GM12878 (cell line): ENCODE measurements at regions of chr6 and their contacts with region 1.

Region 1: DNA sequence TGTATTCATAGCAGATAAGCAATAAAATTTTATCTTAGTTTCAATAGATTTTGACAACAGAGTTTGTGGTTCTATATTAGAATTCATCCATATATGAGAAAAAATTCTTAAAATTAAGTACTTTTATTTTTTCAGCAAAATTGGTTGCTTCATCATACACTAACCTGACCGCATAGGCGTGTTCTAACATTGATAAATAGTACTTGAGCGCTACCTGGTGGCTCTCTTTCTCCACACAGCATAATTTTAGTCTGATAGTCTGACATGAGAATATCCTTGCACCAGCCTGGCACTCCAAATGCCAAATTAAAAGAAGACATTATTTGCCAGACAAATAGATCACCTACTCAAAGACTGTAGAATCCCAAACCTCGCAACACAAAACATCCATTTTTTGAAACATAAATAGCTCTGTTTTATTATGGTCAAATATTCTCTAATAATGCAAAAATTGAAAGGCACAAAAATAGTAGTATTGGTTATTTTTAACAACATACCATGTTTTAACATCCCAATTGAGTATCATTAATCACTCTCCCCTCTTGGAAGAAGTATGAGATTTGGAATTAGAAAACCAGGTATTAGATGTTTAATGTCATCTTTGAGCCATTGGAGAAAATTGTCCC is 33.0 kb upstream of the FILIP1 start:
- DNase-seq: peak; percentile 40
- ATAC-seq: peak; percentile 97
- H3K4me3 ChIP-seq: no peak overlapping the region
- H3K27ac ChIP-seq: no peak overlapping the region
- H3K4me1 ChIP-seq: no peaks in the 10 kb centered on the region
- H3K27me3 ChIP-seq: no peaks in the 10 kb centered on the region
- CTCF ChIP-seq: peak; percentile 61 to 78 (median 65)
- EP300 ChIP-seq: no peak
- POLR2A ChIP-seq: no peak
- RAD21 ChIP-seq: peak; percentile 95

Region 2: GRCh38 chr6:73854998-73855718 is 1671.5 kb before region 1 on chr6:
- CTCF ChIA-PET with region 1: no interaction called
- POLR2A ChIA-PET with region 1: no interaction called
- RAD21 ChIA-PET with region 1: no interaction called
- SMC1A ChIA-PET with region 1: no interaction called
- in situ Hi-C with region 1: no loop called
- intact Hi-C with region 1: loop called (anchors 10 kb)
- DNase-seq: no peak
- ATAC-seq: peak; percentile 71
- H3K4me3 ChIP-seq: no peak overlapping the region
- H3K27ac ChIP-seq: no peak overlapping the region
- H3K4me1 ChIP-seq: no peaks in the 10 kb centered on the region
- H3K27me3 ChIP-seq: no peaks in the 10 kb centered on the region
- CTCF ChIP-seq: peak; percentile 52 to 62 (median 59); a peak in 5 of 6 replicates
- EP300 ChIP-seq: no peak
- POLR2A ChIP-seq: no peak
- RAD21 ChIP-seq: peak; percentile 66

Region 3: DNA sequence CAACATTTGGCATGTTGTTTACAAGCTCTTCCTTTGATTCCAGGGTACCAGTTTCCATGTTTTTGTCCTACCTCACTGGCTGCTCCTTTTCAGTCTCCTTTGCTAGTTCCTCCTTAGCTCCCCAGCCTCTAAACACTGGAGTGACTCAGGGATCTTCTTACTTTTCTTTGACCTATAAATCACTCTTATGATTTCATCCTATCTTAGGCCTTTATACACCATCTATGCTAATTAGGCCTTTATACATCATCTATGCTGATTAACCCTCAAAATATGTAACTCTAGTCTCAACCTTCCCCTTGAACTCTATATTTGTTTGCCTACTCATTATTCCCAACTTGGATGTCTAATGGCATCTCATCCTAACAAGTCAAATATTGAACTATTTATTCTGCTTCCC is 251.5 kb before region 1 on chr6:
- CTCF ChIA-PET with region 1: interaction called, 12 read pairs
- POLR2A ChIA-PET with region 1: no interaction called
- RAD21 ChIA-PET with region 1: interaction called, 3 read pairs
- SMC1A ChIA-PET with region 1: interaction called, 10 read pairs
- in situ Hi-C with region 1: no loop called
- intact Hi-C with region 1: no loop called
- DNase-seq: no peak
- ATAC-seq: no peak
- H3K4me3 ChIP-seq: no peak overlapping the region
- H3K27ac ChIP-seq: no peak overlapping the region
- H3K4me1 ChIP-seq: no peaks in the 10 kb centered on the region
- H3K27me3 ChIP-seq: no peaks in the 10 kb centered on the region
- CTCF ChIP-seq: no peak
- EP300 ChIP-seq: no peak
- POLR2A ChIP-seq: no peak
- RAD21 ChIP-seq: no peak

Region 4: DNA sequence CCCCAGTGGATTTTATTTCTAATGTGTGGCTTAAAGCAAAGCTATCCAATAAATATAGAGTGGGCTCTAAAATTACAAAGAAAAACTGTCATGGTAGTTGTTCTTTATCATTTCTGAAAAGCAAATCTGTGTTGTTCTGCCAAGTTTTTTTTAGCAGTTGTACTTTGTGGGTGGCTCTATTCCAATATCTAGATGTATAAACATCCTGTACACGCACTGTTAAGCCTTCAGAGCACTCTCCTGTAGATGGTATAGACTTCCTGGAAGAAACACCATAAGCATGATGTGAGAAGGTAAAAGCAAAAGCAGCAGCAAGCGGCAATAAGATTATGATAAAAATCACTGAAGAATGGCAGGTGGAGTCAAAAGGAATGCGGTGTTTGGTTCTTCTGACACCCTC is 220.6 kb before region 1 on chr6:
- CTCF ChIA-PET with region 1: interaction called, 19 read pairs
- POLR2A ChIA-PET with region 1: no interaction called
- RAD21 ChIA-PET with region 1: interaction called, 6 read pairs
- SMC1A ChIA-PET with region 1: interaction called, 40 read pairs
- in situ Hi-C with region 1: no loop called
- intact Hi-C with region 1: no loop called
- DNase-seq: no peak
- ATAC-seq: no peak
- H3K4me3 ChIP-seq: no peak overlapping the region
- H3K27ac ChIP-seq: no peak overlapping the region
- H3K4me1 ChIP-seq: no peaks in the 10 kb centered on the region
- H3K27me3 ChIP-seq: no peaks in the 10 kb centered on the region
- CTCF ChIP-seq: no peak
- EP300 ChIP-seq: no peak
- POLR2A ChIP-seq: no peak
- RAD21 ChIP-seq: no peak

Region 5: DNA sequence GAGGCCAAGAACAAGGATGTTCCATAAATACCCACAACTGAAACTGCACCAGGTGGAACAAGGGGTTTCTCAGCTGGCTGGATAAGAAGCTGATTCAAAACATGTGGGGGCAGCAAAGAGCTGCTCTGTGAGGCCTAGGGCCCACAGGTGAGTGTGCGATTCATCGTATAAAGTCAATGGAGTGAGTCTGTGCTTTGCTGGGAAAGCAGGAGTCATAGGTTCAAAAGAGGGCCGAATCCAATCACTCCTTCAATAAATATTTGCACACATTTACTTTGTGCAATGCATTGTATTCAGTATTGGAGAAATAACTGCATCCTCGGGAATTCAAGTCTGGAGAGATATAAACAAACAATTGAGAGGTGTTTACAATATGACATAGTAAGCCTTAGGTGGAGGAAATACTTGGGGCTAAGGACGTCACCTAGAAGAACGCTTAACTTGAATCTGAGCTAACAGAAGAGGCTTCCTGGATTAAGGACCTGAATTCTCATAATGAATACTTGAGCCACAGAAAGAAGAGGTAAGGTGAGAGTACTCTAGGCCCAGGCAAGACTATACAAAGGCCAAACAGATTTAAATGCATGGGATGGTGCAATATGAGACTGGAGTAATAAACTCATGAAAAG is 158.3 kb before region 1 on chr6:
- CTCF ChIA-PET with region 1: interaction called, 77 read pairs
- POLR2A ChIA-PET with region 1: no interaction called
- RAD21 ChIA-PET with region 1: interaction called, 19 read pairs
- SMC1A ChIA-PET with region 1: interaction called, 82 read pairs
- in situ Hi-C with region 1: loop called (anchors 10 kb)
- intact Hi-C with region 1: loop called (anchors 1 kb)
- DNase-seq: no peak
- ATAC-seq: peak; percentile 88
- H3K4me3 ChIP-seq: no peak overlapping the region
- H3K27ac ChIP-seq: no peak overlapping the region
- H3K4me1 ChIP-seq: no peaks in the 10 kb centered on the region
- H3K27me3 ChIP-seq: no peaks in the 10 kb centered on the region
- CTCF ChIP-seq: peak; percentile 46 to 56 (median 50); a peak in 5 of 6 replicates
- EP300 ChIP-seq: no peak
- POLR2A ChIP-seq: no peak
- RAD21 ChIP-seq: peak; percentile 69

Region 6: GRCh38 chr6:75563032-75563431 is 36.4 kb after region 1 on chr6:
- CTCF ChIA-PET with region 1: interaction called, 4 read pairs
- POLR2A ChIA-PET with region 1: no interaction called
- RAD21 ChIA-PET with region 1: no interaction called
- SMC1A ChIA-PET with region 1: interaction called, 14 read pairs
- in situ Hi-C with region 1: no loop called
- intact Hi-C with region 1: no loop called
- DNase-seq: no peak
- ATAC-seq: peak; percentile 99
- H3K4me3 ChIP-seq: no peak overlapping the region
- H3K27ac ChIP-seq: no peak overlapping the region
- H3K4me1 ChIP-seq: no peaks in the 10 kb centered on the region
- H3K27me3 ChIP-seq: no peaks in the 10 kb centered on the region; a peak in 1 of 4 replicates
- CTCF ChIP-seq: peak; percentile 51 to 60 (median 57)
- EP300 ChIP-seq: no peak
- POLR2A ChIP-seq: no peak
- RAD21 ChIP-seq: peak; percentile 45